GM18951 (cell line): ENCODE measurements at regions of chr7 and their contacts with region 1.

Region 1: GRCh38 chr7:50664461-50664922 is 99.3 kb upstream of the DDC start:
- POLR2A ChIP-seq: no peak

Region 2: GRCh38 chr7:50467817-50468610 is 196.5 kb before region 1 on chr7:
- in situ Hi-C with region 1: loop called (anchors 25 kb)
- POLR2A ChIP-seq: no peak

Region 3: GRCh38 chr7:52079726-52080125 is 1415.2 kb after region 1 on chr7:
- in situ Hi-C with region 1: no loop called
- POLR2A ChIP-seq: no peak